Ascending aorta (tissue), 2 donors: ENCODE measurements at regions of chr2 and their contacts with region 1.

Region 1: GRCh38 chr2:15636972-15637785 is 45.5 kb downstream of the DDX1 start:
- DNase-seq: peak in 1 of 2 donors; percentile 84
- H3K4me3 ChIP-seq: no peak overlapping the region
- H3K27ac ChIP-seq: peak overlapping the region in 1 of 2 donors; percentile 7
- H3K4me1 ChIP-seq: peaks cover 0 to 32% of the 10 kb centered on the region in 2 donors
- H3K27me3 ChIP-seq: no peaks in the 10 kb centered on the region
- CTCF ChIP-seq: peak; percentile 79 to 85 (median 85)

Region 2: GRCh38 chr2:15730545-15731212 is 93.5 kb after region 1 on chr2:
- intact Hi-C with region 1: loop called (anchors 5 kb)
- DNase-seq: peak; percentile 33 to 92
- H3K4me3 ChIP-seq: no peak overlapping the region
- H3K27ac ChIP-seq: no peak overlapping the region
- H3K4me1 ChIP-seq: peaks cover 4 to 30% of the 10 kb centered on the region in 2 donors
- H3K27me3 ChIP-seq: no peaks in the 10 kb centered on the region
- CTCF ChIP-seq: no peak

Region 3: GRCh38 chr2:16281451-16282336 is 644.5 kb after region 1 on chr2:
- intact Hi-C with region 1: loop called (anchors 5 kb)
- DNase-seq: no peak
- H3K4me3 ChIP-seq: no peak overlapping the region
- H3K27ac ChIP-seq: no peak overlapping the region
- H3K4me1 ChIP-seq: no peaks in the 10 kb centered on the region
- H3K27me3 ChIP-seq: no peaks in the 10 kb centered on the region
- CTCF ChIP-seq: peak in 1 of 3 experiments; percentile 22

Region 4: GRCh38 chr2:16608661-16609643 is 971.8 kb after region 1 on chr2:
- intact Hi-C with region 1: loop called (anchors 2 kb)
- DNase-seq: peak; percentile 49 to 89
- H3K4me3 ChIP-seq: peak overlapping the region; percentile 50 to 60
- H3K27ac ChIP-seq: no peak overlapping the region
- H3K4me1 ChIP-seq: peaks cover 0 to 3% of the 10 kb centered on the region in 2 donors
- H3K27me3 ChIP-seq: no peaks in the 10 kb centered on the region
- CTCF ChIP-seq: peak; percentile 77 to 96 (median 95)

Region 5: GRCh38 chr2:16756831-16757644 is 1119.9 kb after region 1 on chr2:
- intact Hi-C with region 1: loop called (anchors 1 kb)
- DNase-seq: peak in 1 of 2 donors; percentile 77
- H3K4me3 ChIP-seq: no peak overlapping the region
- H3K27ac ChIP-seq: no peak overlapping the region
- H3K4me1 ChIP-seq: no peaks in the 10 kb centered on the region
- H3K27me3 ChIP-seq: no peaks in the 10 kb centered on the region
- CTCF ChIP-seq: peak; percentile 76 to 87 (median 83)